Dorsolateral prefrontal cortex (tissue), 120 donors: ENCODE measurements at regions of chr6 and their contacts with region 1.

Region 1: DNA sequence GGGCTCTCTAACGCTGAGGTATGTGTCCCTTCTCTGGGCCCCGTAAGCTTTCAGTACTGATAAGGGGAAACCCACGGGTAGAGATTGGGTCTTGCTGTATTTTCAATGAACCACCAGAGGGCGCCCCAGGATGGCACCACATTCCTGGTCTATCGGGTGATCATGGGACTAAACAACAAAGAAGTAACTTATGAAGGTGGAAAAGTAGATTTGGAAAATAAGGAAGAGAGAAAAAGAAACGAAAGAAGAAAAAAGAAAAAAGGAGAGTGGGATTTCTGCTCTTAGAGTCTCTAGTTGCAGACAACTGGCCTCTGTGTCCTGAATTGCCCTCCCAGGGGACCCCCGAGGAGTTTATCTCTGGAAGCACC is 93.8 kb downstream of the GMPR start:
- DNase-seq: peak; percentile 69 to 90 (median 84)
- H3K4me3 ChIP-seq: peak overlapping the region in 40 of 59 donors; percentile 0 to 47 (median 26)
- H3K27ac ChIP-seq: peak overlapping the region in 54 of 59 donors; percentile 9 to 89 (median 66)
- H3K27me3 ChIP-seq: no peaks in the 10 kb centered on the region
- CTCF ChIP-seq: peak; percentile 87 to 98 (median 94)

Region 2: GRCh38 chr6:16286148-16286522 is 46.0 kb before region 1 on chr6:
- intact Hi-C with region 1: loop called (anchors 2 to 5 kb)
- DNase-seq: peak; percentile 15 to 83 (median 65)
- H3K4me3 ChIP-seq: peak overlapping the region in 46 of 59 donors; percentile 9 to 62 (median 37)
- H3K27ac ChIP-seq: peak overlapping the region in 1 of 59 donors; percentile 42
- H3K27me3 ChIP-seq: no peaks in the 10 kb centered on the region
- CTCF ChIP-seq: peak; percentile 42 to 94 (median 84)

Region 3: DNA sequence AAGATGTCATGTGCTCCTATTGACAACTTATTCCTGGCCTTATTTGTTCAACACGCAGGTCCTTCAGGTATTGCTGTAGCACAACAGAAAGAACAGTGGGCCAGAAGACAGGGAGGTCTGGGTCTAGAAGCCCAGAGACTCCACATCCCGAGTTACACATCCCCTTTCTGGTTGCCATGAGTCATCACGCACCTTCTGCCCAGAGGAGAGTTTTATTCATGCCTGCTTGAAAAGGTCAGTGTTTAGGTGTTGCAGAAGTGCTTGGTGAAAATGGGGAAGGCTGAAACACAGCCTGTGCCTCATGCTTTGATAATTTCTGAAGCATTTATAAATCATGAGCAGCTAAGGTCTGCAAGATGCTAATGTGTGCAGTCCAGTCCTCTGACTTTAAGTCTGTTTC is 162.6 kb after region 1 on chr6:
- intact Hi-C with region 1: loop called in 1 of 2 experiments (anchors 5 kb)
- DNase-seq: no peak
- H3K4me3 ChIP-seq: no peak overlapping the region
- H3K27ac ChIP-seq: no peak overlapping the region
- H3K27me3 ChIP-seq: no peaks in the 10 kb centered on the region
- CTCF ChIP-seq: no peak

Region 4: DNA sequence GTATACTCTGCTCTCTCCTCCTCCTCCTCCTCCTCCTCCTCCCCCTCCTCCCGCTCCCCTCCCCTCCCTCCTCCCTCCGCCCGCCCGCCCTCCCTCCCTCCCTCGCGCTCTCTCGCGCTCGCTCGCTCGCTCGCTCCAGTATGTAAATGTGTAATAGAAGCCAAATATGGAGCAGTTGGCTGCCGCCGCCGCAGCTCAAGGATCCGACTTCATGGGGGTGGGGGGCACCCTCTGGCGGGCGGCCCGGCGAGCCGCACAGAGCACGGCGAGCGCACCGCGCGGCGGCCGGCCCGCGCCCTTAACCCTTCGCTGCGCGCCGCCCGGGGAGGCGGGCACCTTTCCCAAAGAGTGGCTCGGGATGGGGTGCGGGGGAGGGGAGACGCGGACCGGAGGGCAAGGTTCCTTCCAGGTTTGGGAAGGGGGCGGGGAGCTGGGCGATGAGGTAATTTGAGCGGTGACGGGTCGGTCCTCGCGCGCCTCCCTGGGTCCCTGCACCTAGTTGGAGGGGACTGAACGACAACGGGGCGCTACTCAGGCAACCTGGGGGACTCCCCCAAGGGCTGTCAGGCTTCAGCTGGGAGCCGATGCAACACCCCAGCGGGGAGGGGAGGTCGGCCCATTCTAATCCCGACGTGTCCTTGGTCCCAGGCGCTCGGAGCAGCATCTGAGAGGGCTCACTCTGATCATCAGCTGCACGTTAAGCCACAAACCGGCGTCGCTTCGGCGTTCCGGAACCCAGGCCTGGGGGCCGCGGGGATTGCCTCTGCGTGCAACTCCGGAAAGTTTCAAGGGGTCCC is 429.5 kb after region 1 on chr6:
- intact Hi-C with region 1: loop called (anchors 2 kb)
- DNase-seq: peak; percentile 66 to 88 (median 82)
- H3K4me3 ChIP-seq: peak overlapping the region; percentile 48 to 97 (median 84)
- H3K27ac ChIP-seq: peak overlapping the region; percentile 70 to 99 (median 97)
- H3K27me3 ChIP-seq: no peaks in the 10 kb centered on the region
- CTCF ChIP-seq: peak in 30 of 56 donors; percentile 6 to 50 (median 26)

Region 5: DNA sequence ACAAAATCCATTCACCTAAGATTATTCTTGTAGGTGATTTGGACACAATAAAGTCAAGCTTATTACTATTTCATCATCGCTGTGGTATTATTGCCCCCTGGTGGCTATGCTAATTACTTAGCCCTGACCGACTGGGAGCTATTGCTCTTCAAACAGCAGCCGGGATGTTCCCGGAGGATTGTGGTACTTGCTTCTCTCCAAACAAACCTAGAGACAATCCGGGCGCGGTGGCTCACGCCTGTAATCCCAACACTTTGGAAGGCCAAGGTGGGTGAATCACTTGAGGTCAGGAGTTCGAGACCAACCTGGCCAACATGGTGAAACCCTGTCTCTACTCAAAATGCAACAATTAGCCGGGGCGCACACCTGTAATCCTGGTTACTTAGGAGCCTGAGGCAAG is 754.3 kb after region 1 on chr6:
- intact Hi-C with region 1: loop called in 1 of 2 experiments (anchors 10 kb)
- DNase-seq: peak in 7 of 10 donors; percentile 16 to 81 (median 56)
- H3K4me3 ChIP-seq: no peak overlapping the region
- H3K27ac ChIP-seq: no peak overlapping the region
- H3K27me3 ChIP-seq: no peaks in the 10 kb centered on the region
- CTCF ChIP-seq: peak; percentile 58 to 90 (median 80)